ENCODE measurements at regions of chr10 and their contacts with region 1.

Region 1: GRCh38 chr10:15137636-15138035 is 30.9 kb downstream of the NMT2 start:
- DNase-seq: no peak
- H3K4me3 ChIP-seq: no peak overlapping the region
- H3K27ac ChIP-seq: no peak overlapping the region
- H3K4me1 ChIP-seq: peaks cover 0 to 13% (median 6%) of the 10 kb centered on the region in 4 donors
- H3K27me3 ChIP-seq: no peaks in the 10 kb centered on the region
- CTCF ChIP-seq: no peak

Region 2: GRCh38 chr10:15595260-15595659 is 457.6 kb after region 1 on chr10:
- intact Hi-C with region 1: no loop called
- DNase-seq: no peak
- H3K4me3 ChIP-seq: no peak overlapping the region
- H3K27ac ChIP-seq: no peak overlapping the region
- H3K4me1 ChIP-seq: no peaks in the 10 kb centered on the region
- H3K27me3 ChIP-seq: no peaks in the 10 kb centered on the region
- CTCF ChIP-seq: no peak

Region 3: GRCh38 chr10:16954280-16955030 is 1816.8 kb after region 1 on chr10:
- intact Hi-C with region 1: loop called (anchors 5 kb)
- DNase-seq: no peak
- H3K4me3 ChIP-seq: no peak overlapping the region
- H3K27ac ChIP-seq: no peak overlapping the region
- H3K4me1 ChIP-seq: peaks cover 0 to 11% (median 1%) of the 10 kb centered on the region in 4 donors
- H3K27me3 ChIP-seq: no peaks in the 10 kb centered on the region
- CTCF ChIP-seq: no peak